ENCODE measurements at regions of chr20 and their contacts with region 1.

Region 1: DNA sequence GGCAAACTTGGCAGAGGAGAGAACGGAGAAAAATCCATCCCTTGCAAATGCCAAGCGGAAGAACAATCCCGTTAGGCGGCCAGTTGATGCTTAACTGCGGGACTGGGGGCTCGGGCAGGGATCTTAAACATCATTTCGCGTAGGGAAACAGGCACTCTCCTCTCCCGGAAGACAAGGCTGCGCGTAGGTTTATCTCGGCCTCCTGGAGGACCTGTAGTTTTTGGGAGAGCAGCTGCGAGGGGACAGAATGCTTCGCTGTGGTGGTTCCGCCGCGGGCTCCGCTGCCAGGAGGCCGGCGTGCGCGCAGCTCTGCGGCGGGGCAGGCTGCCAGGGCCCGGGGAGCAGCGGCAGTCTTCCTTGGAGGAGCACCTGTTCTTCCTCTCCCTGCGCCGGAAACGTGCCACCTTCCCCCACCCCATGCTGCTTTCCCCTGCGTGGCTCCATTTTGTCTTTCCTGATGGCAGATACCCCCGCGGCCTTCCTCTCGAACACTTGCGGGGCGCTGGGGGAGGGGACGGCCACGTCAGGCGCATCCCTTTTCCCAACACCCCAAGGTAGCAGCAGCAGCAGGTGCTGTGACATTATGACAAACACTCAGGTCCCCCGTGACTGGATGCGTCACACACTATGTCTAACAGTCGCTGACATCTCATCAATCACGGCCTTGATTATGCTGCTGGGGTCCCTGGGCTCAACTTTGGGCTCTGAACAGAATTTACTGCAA is 230.7 kb upstream of the BTBD3 start:
- DNase-seq: no peak
- H3K27ac ChIP-seq: no peak overlapping the region
- CTCF ChIP-seq: no peak

Region 2: DNA sequence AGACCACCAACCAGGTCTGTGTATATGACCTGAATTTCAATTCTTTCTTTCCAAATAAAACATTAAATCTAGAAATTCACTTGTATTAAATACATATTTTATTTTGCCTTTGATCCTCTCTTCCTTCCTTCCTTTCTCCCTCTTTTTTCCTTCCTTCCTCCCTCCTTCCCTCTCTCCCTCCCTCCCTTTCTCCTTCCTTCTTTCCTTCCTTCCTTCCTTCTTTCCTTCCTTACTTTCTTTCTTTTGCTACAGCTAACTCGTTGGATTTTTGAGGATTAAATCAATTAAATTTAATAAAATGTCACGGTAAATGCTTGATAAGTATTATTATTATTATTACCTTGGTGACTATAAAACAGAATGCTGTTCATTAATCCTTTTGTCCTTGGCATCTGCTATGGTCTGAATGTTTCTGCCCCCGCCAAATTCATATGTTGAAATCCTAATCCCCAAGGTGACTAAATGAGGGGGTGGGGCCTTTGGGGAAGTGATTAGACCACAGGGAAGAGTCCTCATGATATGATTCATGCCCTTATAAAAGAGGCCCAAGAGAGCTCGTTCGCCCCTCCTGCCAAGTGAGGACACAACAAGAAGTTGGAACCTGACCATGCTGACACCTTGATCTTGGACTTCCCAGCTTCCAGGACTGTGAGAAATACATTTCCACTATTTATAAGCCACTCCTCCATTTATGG is 163.1 kb after region 1 on chr20:
- CTCF ChIA-PET with region 1: no interaction called
- POLR2A ChIA-PET with region 1: no interaction called
- DNase-seq: peak; percentile 83
- H3K27ac ChIP-seq: no peak overlapping the region; the same call in 1 of the 2 replicates
- CTCF ChIP-seq: no peak

Region 3: GRCh38 chr20:13068349-13068748 is 1381.4 kb after region 1 on chr20:
- CTCF ChIA-PET with region 1: interaction called, 11 read pairs
- POLR2A ChIA-PET with region 1: no interaction called
- DNase-seq: peak; percentile 58
- H3K27ac ChIP-seq: no peak overlapping the region
- CTCF ChIP-seq: no peak